ENCODE measurements at regions of chr16 and their contacts with region 1.

Region 1: GRCh38 chr16:89217388-89218191 is at the start of gene ZNF778:
- DNase-seq: peak; percentile 88
- ATAC-seq: peak; percentile 96 to 97
- total RNA-seq, gene ZNF778: 7.5 to 9.8 TPM

Region 2: DNA sequence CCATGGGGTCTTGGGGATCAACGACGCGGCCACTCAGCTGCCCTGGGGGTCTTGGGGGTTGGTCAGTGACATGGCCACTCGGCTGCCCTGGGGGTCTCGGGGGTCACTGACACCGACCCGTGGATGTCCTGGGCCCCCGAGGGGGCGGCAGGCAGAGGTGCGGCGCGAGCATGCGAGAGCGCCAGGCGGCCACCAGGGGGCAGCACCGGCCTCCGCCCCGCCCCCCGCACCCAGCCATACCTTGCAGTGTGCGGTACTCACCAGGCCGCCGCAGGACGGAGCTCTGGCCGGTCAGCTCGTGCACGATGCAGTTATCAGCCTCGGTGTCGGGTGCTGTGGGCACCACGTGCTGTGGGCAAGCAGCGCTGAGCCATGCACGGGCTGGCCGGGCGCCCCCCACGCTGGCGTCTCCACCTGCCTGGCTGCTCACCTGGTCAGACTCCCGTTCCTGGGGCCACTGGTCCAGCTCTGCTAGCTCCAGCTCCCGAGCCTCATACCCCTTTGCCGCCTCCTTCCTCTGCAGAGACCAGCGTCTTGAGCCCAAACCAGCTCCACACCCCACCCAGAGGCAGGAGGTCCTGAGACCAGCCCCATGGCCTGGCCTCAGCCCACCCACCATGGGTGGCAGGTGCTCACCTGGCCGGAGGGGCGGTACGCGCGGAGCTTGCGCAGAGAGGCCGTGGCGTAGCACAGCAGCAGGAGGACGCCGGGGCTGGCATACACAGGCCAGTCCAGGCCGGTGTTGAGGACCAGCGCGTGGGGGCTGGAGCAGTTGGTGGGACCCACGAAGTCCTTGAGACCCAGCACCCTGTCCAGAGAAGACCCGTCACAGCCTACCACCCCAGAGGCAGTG is 480.1 kb before region 1 on chr16:
- intact Hi-C with region 1: loop called (anchors 10 kb)
- DNase-seq: peak; percentile 76
- ATAC-seq: peak; percentile 80 to 81

Region 3: DNA sequence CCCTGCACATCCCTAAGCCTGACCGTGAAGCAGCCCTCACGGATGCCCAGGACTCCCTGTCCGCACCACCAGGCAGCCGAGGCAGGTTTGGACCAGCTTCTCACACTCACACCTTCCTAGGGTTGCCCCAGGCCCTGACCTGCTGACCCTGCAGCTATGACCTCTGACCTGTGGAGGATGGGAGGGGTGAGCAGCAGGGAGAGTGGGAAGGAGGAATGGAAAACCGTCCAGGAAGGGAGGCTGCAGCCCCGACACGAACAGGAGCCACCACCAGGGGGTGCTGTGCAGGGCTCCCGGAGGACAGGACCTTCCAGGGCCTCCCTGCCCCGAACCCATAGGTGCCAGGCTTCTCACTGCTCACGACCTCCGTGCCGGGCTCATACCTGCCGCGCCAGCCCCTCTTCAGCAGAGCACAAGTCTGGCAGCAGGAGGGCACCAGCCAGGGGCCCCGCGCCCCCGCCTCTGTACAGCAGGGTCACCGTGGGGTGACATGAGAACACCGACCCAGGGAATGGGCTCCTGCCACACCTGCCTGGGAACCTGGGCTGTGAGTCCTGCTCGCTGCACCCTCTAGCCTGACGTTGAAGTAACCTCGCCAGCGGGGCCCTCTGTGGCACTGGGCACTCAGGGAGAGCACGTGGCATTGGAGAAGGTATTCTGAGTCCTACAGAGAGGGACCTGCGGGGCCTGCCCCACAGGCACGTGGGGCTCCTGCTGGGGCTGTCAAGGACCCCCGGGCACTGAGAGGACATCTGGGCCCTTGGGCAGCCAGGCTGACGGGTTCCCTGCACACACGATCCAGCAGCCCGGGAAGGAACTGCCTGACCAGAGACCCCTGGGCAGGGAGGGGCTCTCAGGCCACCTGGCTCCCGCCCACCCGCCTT is 473.7 kb before region 1 on chr16:
- intact Hi-C with region 1: loop called (anchors 10 kb)
- DNase-seq: peak; percentile 86
- ATAC-seq: peak; percentile 60 to 67

Region 4: DNA sequence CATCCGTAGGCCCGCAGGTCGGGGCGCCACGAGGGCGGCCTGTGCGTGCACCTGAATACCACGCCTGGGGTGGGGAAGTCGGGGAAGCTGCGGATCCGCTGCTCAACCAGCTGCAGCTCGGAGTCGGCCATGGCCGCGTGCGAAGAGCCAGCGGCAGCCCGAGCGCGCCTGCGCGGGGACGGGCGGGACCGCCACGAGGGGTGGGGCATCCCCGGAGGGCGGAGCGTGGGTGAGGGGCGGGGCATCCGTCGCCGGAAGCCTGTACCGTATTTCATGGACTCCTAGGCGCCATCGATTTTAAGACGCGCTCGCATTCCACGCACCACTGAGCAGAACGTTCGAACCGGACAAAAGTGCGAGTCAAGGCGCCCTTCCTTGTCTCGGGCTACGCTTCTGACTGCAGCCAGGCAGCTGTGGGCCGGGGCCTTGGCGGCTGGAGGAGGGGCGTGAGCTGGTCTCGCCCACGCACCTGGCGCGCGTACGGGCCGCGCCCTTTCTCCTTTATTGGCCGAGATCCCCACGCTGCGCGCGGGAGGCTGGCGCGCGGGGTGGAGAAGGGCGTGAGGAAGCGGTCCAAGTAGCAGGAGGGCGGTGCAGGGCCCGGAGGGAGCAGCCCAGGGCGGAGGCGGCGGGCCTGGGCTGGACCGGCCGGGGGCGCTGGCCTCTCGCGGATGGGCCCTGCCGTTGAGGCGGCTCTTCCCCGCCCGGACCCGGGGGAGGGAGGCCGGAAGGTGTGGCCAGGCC is 405.6 kb before region 1 on chr16 and contains the start of gene APRT:
- intact Hi-C with region 1: loop called in 1 of 2 experiments (anchors 10 kb)
- DNase-seq: peak; percentile 94
- ATAC-seq: peak; percentile 93 to 95
- total RNA-seq, gene APRT: 63.8 to 64.2 TPM

Measured in left cardiac atrium (tissue), 4 donors.